ENCODE measurements at regions of chr22 and their contacts with region 1.

Region 1: GRCh38 chr22:19970479-19971275 is 29.1 kb upstream of the TXNRD2 start:
- DNase-seq: peak; percentile 84 to 86
- ATAC-seq: peak; percentile 49 to 65 (median 60)
- H3K4me3 ChIP-seq: no peak overlapping the region
- H3K4me3 Mint-ChIP-seq: peak overlapping the region; percentile 87
- H3K27ac ChIP-seq: peak overlapping the region; percentile 61
- H3K27ac Mint-ChIP-seq: peak overlapping the region; percentile 84 to 85
- H3K4me1 ChIP-seq: peaks cover 76% of the 10 kb centered on the region
- H3K4me1 Mint-ChIP-seq: peaks cover 45 to 60% of the 10 kb centered on the region in 2 donors
- H3K27me3 ChIP-seq: no peaks in the 10 kb centered on the region
- H3K27me3 Mint-ChIP-seq: no peaks in the 10 kb centered on the region
- CTCF ChIP-seq: peak; percentile 96

Region 2: GRCh38 chr22:19959043-19959586 is 11.6 kb before region 1 on chr22:
- intact Hi-C with region 1: no loop called
- DNase-seq: no peak
- ATAC-seq: no peak
- H3K4me3 ChIP-seq: no peak overlapping the region
- H3K4me3 Mint-ChIP-seq: no peak overlapping the region
- H3K27ac ChIP-seq: no peak overlapping the region
- H3K27ac Mint-ChIP-seq: no peak overlapping the region
- H3K4me1 ChIP-seq: peaks cover 44% of the 10 kb centered on the region
- H3K4me1 Mint-ChIP-seq: peaks cover 21% of the 10 kb centered on the region in 2 donors
- H3K27me3 ChIP-seq: no peaks in the 10 kb centered on the region
- H3K27me3 Mint-ChIP-seq: no peaks in the 10 kb centered on the region
- CTCF ChIP-seq: no peak

Region 3: DNA sequence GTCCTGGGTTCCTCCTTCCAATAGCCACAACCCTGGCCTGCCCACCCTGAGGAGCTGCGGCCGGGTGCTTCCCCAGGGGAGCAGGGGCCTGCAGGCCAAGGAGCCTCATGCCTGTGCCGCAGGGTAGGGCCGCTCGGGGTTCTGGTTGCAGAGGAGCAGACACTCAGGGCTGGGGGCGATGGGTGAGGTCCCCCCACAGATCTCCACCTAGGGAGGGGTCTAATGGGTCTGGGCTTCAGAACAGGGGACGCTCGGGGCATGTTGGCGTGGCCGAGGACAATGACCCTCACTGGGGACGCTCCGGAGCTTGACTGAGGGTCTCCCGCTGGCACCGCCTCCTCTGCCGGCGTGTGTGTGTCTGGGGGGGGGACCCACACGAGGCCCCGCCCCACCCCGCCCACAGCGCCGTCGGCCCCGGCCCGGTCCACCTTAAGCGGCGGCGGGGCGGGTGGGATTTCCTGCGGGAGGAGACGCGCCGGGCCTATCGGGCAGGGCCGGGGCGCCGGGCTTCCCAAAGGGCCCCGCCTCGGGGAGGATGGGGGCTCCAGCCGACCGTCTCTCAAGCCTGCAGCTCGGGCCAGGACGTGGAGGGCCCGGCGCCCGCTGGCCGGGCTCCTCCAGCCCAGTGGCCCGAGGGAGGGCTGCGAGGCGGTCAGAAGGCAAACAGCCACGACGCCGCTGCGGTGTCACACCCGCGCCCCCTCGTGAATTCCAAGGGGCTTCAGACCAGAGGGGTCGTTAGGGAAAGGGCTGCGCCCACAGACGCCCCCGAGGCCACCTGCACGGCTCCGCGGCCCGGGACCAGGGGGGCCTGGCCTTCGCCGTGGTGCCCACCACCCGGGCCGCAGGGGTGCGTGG is 160.3 kb after region 1 on chr22:
- intact Hi-C with region 1: loop called (anchors 5 kb)
- DNase-seq: peak; percentile 66 to 86
- ATAC-seq: peak; percentile 75 to 83 (median 82)
- H3K4me3 ChIP-seq: peak overlapping the region; percentile 66
- H3K4me3 Mint-ChIP-seq: peak overlapping the region; percentile 74
- H3K27ac ChIP-seq: peak overlapping the region; percentile 67
- H3K27ac Mint-ChIP-seq: peak overlapping the region in 1 of 2 donors; percentile 35
- H3K4me1 ChIP-seq: peaks cover 42% of the 10 kb centered on the region
- H3K4me1 Mint-ChIP-seq: peaks cover 0 to 20% of the 10 kb centered on the region in 2 donors
- H3K27me3 ChIP-seq: no peaks in the 10 kb centered on the region
- H3K27me3 Mint-ChIP-seq: no peaks in the 10 kb centered on the region
- CTCF ChIP-seq: no peak

Region 4: GRCh38 chr22:20268279-20269012 is 297.8 kb after region 1 on chr22 and contains the start of gene RTN4R:
- intact Hi-C with region 1: loop called (anchors 1 kb)
- DNase-seq: peak; percentile 67 to 77
- ATAC-seq: peak; percentile 73 to 94 (median 94)
- H3K4me3 ChIP-seq: no peak within 1 kb of the TSS
- H3K4me3 Mint-ChIP-seq: peak within 1 kb of the TSS; percentile 82
- H3K27ac ChIP-seq: no peak within 1 kb of the TSS
- H3K27ac Mint-ChIP-seq: peak within 1 kb of the TSS in 1 of 2 donors; percentile 47
- H3K4me1 ChIP-seq: peaks cover 24% of the 10 kb centered on the region
- H3K4me1 Mint-ChIP-seq: peaks cover 6 to 16% of the 10 kb centered on the region in 2 donors
- H3K27me3 ChIP-seq: peaks cover 4% of the 10 kb centered on the region
- H3K27me3 Mint-ChIP-seq: no peaks in the 10 kb centered on the region
- CTCF ChIP-seq: peak; percentile 62
- total RNA-seq, gene RTN4R: 1.2 to 2.9 (median 1.6) TPM